CD14-positive monocyte (primary cell): ENCODE measurements at regions of chr4 and their contacts with region 1.

Region 1: DNA sequence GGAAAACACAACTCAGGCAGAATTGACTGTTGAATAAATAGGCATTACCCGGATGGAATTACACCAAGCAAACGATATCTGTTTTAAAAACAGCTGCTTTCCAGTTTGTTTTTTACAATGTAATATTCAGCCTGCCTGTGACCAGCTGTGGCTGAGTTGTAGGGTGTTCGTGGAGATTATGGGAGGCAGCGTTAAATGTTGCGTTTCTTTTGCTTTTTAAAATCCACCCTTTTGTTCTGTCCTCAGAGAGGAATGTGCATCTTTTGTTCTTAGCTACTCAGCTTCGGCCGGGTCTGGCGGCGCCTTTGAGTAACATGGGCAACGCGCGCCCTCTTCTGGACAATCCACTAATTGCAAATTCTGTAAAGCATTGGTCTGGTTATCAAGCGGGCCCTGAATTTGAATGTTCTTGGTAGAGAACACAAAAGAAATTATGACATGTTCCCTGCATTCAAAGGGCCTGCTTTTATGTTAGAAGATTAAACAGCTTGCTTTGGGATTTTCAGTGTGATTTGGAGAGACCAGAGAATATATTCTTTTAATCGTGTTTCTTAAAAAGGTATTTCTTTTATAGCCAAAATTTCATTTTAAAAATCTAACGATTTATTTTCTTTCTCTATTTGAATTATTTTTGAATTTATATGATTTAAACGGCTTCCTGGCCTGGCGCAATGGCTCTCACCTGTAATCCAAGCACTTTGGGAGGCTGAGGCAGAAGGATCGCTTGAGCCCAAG is 76.3 kb upstream of the TRIM2 start:
- DNase-seq: peak; percentile 64 to 77 (median 73)
- H3K4me3 ChIP-seq: no peak overlapping the region
- H3K4me3 Mint-ChIP-seq: peak overlapping the region in 1 of 2 donors; percentile 26
- H3K27ac ChIP-seq: no peak overlapping the region
- H3K27ac Mint-ChIP-seq: no peak overlapping the region
- H3K4me1 ChIP-seq: peaks cover 0 to 3% of the 10 kb centered on the region in 2 donors
- H3K4me1 Mint-ChIP-seq: peaks cover 4% of the 10 kb centered on the region
- H3K27me3 ChIP-seq: no peaks in the 10 kb centered on the region
- H3K27me3 Mint-ChIP-seq: peaks cover 0 to 6% (median 4%) of the 10 kb centered on the region in 3 donors
- CTCF ChIP-seq: peak; percentile 94

Region 2: DNA sequence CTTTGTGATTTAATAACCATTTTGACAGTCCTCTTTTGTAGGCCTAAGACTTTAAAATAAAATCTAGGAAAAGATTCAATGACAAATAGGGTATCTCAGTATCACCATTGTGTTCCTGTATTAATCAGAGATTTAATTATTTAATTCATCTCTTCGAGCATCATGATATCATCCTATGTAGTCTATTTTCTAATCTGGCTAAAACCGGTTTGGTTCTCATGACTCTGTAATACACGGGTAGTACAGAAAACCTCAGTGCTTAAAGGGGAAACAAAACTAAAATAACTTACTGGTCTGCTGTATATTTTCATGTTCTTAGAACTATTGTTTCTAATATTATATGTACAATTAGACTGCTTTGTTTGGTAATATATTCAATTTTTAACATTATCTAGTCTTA is 568.3 kb before region 1 on chr4:
- intact Hi-C with region 1: no loop called
- DNase-seq: no peak
- H3K4me3 ChIP-seq: no peak overlapping the region
- H3K4me3 Mint-ChIP-seq: no peak overlapping the region
- H3K27ac ChIP-seq: no peak overlapping the region
- H3K27ac Mint-ChIP-seq: no peak overlapping the region
- H3K4me1 ChIP-seq: peaks cover 0 to 5% of the 10 kb centered on the region in 2 donors
- H3K4me1 Mint-ChIP-seq: peaks cover 9% of the 10 kb centered on the region
- H3K27me3 ChIP-seq: no peaks in the 10 kb centered on the region
- H3K27me3 Mint-ChIP-seq: peaks cover 0 to 4% (median 3%) of the 10 kb centered on the region in 3 donors
- CTCF ChIP-seq: no peak

Region 3: DNA sequence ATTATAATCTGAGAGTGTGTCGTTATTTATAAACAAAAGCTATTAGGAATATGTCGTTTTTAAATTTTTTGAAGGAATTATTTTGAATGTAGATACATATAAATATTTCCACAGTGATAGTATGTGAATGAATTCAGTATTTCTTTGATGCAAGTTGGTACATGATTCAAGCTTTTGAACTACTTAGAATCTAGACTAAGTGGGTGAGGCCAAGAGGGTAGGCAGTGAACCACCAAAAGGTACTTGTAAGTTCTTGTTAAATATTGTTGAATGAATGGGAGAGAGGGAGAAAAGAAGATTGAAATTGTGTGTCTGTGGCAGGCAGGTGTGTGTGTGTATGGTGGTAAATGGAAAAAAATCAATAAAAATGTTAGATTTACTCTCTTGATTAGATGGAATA is 278.6 kb before region 1 on chr4:
- intact Hi-C with region 1: loop called in 1 of 2 experiments (anchors 5 kb)
- DNase-seq: no peak
- H3K4me3 ChIP-seq: no peak overlapping the region
- H3K4me3 Mint-ChIP-seq: no peak overlapping the region
- H3K27ac ChIP-seq: no peak overlapping the region
- H3K27ac Mint-ChIP-seq: peak overlapping the region in 3 of 7 donors; percentile 0 to 46 (median 5)
- H3K4me1 ChIP-seq: peaks cover 21 to 23% of the 10 kb centered on the region in 2 donors
- H3K4me1 Mint-ChIP-seq: peaks cover 26% of the 10 kb centered on the region
- H3K27me3 ChIP-seq: no peaks in the 10 kb centered on the region
- H3K27me3 Mint-ChIP-seq: no peaks in the 10 kb centered on the region
- CTCF ChIP-seq: no peak

Region 4: GRCh38 chr4:152956650-152957436 is 171.1 kb before region 1 on chr4:
- intact Hi-C with region 1: no loop called
- DNase-seq: no peak
- H3K4me3 ChIP-seq: no peak overlapping the region
- H3K4me3 Mint-ChIP-seq: no peak overlapping the region
- H3K27ac ChIP-seq: no peak overlapping the region
- H3K27ac Mint-ChIP-seq: no peak overlapping the region
- H3K4me1 ChIP-seq: peaks cover 0 to 11% of the 10 kb centered on the region in 2 donors
- H3K4me1 Mint-ChIP-seq: peaks cover 21% of the 10 kb centered on the region
- H3K27me3 ChIP-seq: no peaks in the 10 kb centered on the region
- H3K27me3 Mint-ChIP-seq: peaks cover 0 to 4% (median 0%) of the 10 kb centered on the region in 3 donors
- CTCF ChIP-seq: no peak

Region 5: DNA sequence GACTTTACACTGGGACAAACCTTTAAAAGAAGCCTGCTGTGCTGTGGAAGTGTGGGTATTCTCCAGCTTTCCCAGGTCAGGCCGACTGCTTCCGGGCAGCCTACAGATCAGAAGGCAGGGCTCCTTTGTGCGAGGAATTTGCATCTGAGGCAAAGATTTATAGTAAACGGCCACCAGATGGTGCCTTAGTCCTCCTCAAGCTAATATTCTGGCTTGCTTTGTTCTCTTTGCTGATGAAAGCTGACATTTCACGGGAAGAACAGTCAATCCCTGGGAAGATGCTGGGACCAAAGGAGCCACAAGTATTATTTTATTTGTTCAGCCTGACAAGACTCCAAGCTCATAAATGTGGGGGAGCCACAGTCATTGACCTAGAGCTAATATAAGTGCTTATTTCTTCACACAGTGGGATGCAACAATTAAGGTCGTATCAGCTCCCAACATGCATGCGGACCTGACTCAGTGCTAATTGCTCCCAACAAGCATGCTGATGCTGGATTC is 44.4 kb before region 1 on chr4:
- intact Hi-C with region 1: loop called (anchors 5 kb)
- DNase-seq: peak; percentile 17 to 47 (median 36)
- H3K4me3 ChIP-seq: no peak overlapping the region
- H3K4me3 Mint-ChIP-seq: peak overlapping the region in 1 of 2 donors; percentile 40
- H3K27ac ChIP-seq: no peak overlapping the region
- H3K27ac Mint-ChIP-seq: peak overlapping the region in 1 of 7 donors; percentile 40
- H3K4me1 ChIP-seq: peaks cover 0 to 7% of the 10 kb centered on the region in 2 donors
- H3K4me1 Mint-ChIP-seq: peaks cover 21% of the 10 kb centered on the region
- H3K27me3 ChIP-seq: no peaks in the 10 kb centered on the region
- H3K27me3 Mint-ChIP-seq: peaks cover 4 to 16% (median 6%) of the 10 kb centered on the region in 3 donors
- CTCF ChIP-seq: peak; percentile 64

Region 6: GRCh38 chr4:153497988-153498967 is 370.4 kb after region 1 on chr4:
- intact Hi-C with region 1: no loop called
- DNase-seq: no peak
- H3K4me3 ChIP-seq: no peak overlapping the region
- H3K4me3 Mint-ChIP-seq: no peak overlapping the region
- H3K27ac ChIP-seq: no peak overlapping the region
- H3K27ac Mint-ChIP-seq: peak overlapping the region in 3 of 7 donors; percentile 38 to 58 (median 50)
- H3K4me1 ChIP-seq: no peaks in the 10 kb centered on the region
- H3K4me1 Mint-ChIP-seq: peaks cover 26% of the 10 kb centered on the region
- H3K27me3 ChIP-seq: no peaks in the 10 kb centered on the region
- H3K27me3 Mint-ChIP-seq: no peaks in the 10 kb centered on the region
- CTCF ChIP-seq: no peak